ENCODE measurements at regions of chr5 and their contacts with region 1.

Region 1: DNA sequence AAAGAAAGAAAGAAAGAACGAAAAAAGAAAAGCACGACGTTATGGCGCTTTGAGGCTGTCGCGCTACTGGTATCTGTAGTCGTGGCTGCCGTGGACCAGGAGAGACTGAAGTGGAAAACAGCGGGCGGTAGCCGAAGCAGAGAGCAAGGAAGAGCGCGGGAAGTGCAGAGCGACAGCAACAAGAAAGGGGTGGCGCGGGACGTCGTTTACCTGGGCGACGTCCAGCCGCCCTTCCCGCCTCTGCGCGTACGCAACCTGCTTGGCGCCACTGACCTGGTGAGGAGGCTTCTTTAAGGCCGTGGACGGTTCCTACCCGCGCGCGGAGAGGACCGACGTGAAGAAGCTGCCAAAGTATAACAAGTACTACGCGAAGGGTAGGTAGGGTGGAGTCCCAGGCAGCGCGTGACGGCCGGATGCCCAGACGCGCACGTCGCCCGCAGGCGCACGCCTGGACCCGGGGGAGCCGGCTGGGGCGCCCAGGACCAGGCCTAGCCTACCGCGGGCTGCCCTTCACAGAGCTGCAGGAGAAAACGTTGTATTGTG is 15.4 kb downstream of the CCL28 start:
- DNase-seq: peak; percentile 49
- H3K4me3 Mint-ChIP-seq: peak overlapping the region; percentile 82
- H3K27ac Mint-ChIP-seq: peak overlapping the region; percentile 68
- H3K4me1 Mint-ChIP-seq: peaks cover 11% of the 10 kb centered on the region
- H3K27me3 Mint-ChIP-seq: no peaks in the 10 kb centered on the region
- CTCF ChIP-seq: no peak

Region 2: DNA sequence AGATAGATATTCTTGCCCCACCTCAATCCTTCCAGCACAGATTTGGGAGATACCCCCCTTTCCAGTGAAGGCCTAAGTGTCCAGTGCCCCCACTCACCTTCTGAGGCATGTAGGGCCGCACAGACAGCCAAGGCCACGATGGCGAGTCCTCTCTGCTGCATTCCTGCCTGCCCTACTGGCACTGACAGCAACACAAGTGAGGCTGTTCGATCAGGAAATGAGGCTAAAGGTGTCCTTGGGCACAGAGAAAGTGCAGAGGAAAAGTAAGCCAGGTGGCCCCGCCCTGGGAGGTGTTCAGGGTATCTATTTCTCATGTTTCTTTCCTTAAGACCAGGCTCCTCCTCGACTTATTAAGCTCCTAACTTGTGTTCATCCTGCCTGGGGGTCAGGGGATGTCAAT is 15.3 kb after region 1 on chr5 and contains the start of gene CCL28:
- CTCF ChIA-PET with region 1: interaction called, 17 read pairs
- POLR2A ChIA-PET with region 1: interaction called, 6 read pairs
- intact Hi-C with region 1: no loop called
- DNase-seq: no peak
- H3K4me3 Mint-ChIP-seq: no peak within 1 kb of the TSS
- H3K27ac Mint-ChIP-seq: no peak within 1 kb of the TSS
- H3K4me1 Mint-ChIP-seq: peaks cover 6% of the 10 kb centered on the region
- H3K27me3 Mint-ChIP-seq: no peaks in the 10 kb centered on the region
- CTCF ChIP-seq: no peak
- total RNA-seq, gene CCL28: 1.6 and 2.2 TPM in 2 replicates

Region 3: GRCh38 chr5:43422143-43422542 is 25.3 kb after region 1 on chr5:
- CTCF ChIA-PET with region 1: interaction called, 24 read pairs
- POLR2A ChIA-PET with region 1: interaction called, 4 read pairs
- intact Hi-C with region 1: no loop called
- DNase-seq: peak; percentile 91
- H3K4me3 Mint-ChIP-seq: peak overlapping the region; percentile 34
- H3K27ac Mint-ChIP-seq: peak overlapping the region; percentile 1
- H3K4me1 Mint-ChIP-seq: peaks cover 32% of the 10 kb centered on the region
- H3K27me3 Mint-ChIP-seq: no peaks in the 10 kb centered on the region
- CTCF ChIP-seq: no peak

Region 4: DNA sequence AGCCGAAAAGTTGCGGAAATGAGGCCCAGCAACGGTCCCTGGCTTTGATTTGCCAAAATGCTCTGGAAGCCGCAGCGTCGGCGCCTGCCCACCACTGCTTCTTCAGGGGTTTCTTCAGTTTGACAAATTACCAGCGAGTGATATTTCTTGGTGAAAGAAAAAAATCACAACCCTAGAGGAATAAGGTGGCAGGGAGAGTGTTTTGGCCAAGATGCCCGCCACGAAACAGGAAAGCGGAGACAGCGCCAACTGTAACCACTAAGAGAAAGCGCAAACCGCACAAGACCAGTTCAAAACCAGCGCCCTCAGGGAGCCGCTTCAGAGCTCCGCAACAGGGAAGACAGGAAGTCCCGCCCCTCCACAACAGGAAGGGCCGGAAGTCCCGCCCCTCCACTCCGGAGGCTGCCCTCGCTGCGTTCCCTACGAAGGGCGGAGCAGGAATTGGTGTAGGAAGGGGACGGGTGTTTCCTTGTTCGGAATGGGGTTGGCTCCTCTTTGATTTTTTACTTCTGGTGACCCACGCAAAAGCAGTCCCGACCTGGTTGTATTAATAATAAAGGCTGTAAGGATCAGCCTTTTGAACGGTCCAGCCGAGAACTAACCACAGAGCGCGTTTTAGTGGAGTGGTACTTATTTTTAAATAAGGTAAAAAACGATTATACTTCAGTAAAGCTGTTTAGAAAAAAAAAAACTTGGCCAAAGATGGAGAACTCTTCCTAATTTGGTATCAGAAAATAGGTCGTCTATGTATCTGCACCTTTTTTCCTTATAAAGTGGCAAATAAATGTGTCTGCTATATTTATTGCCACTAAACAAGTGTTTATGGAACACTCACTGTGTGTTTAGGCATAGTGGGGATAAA is 118.2 kb after region 1 on chr5 and contains the start of gene C5orf34:
- CTCF ChIA-PET with region 1: interaction called, 3 read pairs
- POLR2A ChIA-PET with region 1: interaction called, 4 read pairs
- intact Hi-C with region 1: loop called (anchors 1 kb)
- DNase-seq: peak; percentile 97
- H3K4me3 Mint-ChIP-seq: peak within 1 kb of the TSS; percentile 80
- H3K27ac Mint-ChIP-seq: peak within 1 kb of the TSS; percentile 90
- H3K4me1 Mint-ChIP-seq: peaks cover 21% of the 10 kb centered on the region
- H3K27me3 Mint-ChIP-seq: no peaks in the 10 kb centered on the region
- CTCF ChIP-seq: no peak
- total RNA-seq, gene C5orf34: 3.9 and 5.9 TPM in 2 replicates

Region 5: GRCh38 chr5:43556857-43557542 is 160.2 kb after region 1 on chr5 and contains the start of gene PAIP1:
- CTCF ChIA-PET with region 1: no interaction called
- POLR2A ChIA-PET with region 1: no interaction called
- intact Hi-C with region 1: loop called (anchors 2 kb)
- DNase-seq: peak; percentile 87
- H3K4me3 Mint-ChIP-seq: no peak within 1 kb of the TSS
- H3K27ac Mint-ChIP-seq: peak within 1 kb of the TSS; percentile 84
- H3K4me1 Mint-ChIP-seq: peaks cover 6% of the 10 kb centered on the region
- H3K27me3 Mint-ChIP-seq: no peaks in the 10 kb centered on the region
- CTCF ChIP-seq: peak; percentile 57
- total RNA-seq, gene PAIP1: 105 and 116 TPM in 2 replicates

Region 6: GRCh38 chr5:43582082-43583005 is 185.5 kb after region 1 on chr5:
- CTCF ChIA-PET with region 1: no interaction called
- POLR2A ChIA-PET with region 1: no interaction called
- intact Hi-C with region 1: no loop called
- DNase-seq: no peak
- H3K4me3 Mint-ChIP-seq: no peak overlapping the region
- H3K27ac Mint-ChIP-seq: no peak overlapping the region
- H3K4me1 Mint-ChIP-seq: no peaks in the 10 kb centered on the region
- H3K27me3 Mint-ChIP-seq: no peaks in the 10 kb centered on the region
- CTCF ChIP-seq: no peak

Region 7: GRCh38 chr5:43602461-43603343 is 205.9 kb after region 1 on chr5 and contains the start of gene NNT:
- CTCF ChIA-PET with region 1: interaction called, 3 read pairs
- POLR2A ChIA-PET with region 1: no interaction called
- intact Hi-C with region 1: loop called (anchors 2 kb)
- DNase-seq: peak; percentile 60
- H3K4me3 Mint-ChIP-seq: peak within 1 kb of the TSS; percentile 83
- H3K27ac Mint-ChIP-seq: peak within 1 kb of the TSS; percentile 99
- H3K4me1 Mint-ChIP-seq: peaks cover 11% of the 10 kb centered on the region
- H3K27me3 Mint-ChIP-seq: no peaks in the 10 kb centered on the region
- CTCF ChIP-seq: no peak
- total RNA-seq, gene NNT: 38.4 and 52.3 TPM in 2 replicates

Region 8: GRCh38 chr5:43646992-43647391 is 250.2 kb after region 1 on chr5:
- CTCF ChIA-PET with region 1: no interaction called
- POLR2A ChIA-PET with region 1: no interaction called
- intact Hi-C with region 1: no loop called
- DNase-seq: no peak
- H3K4me3 Mint-ChIP-seq: no peak overlapping the region
- H3K27ac Mint-ChIP-seq: no peak overlapping the region
- H3K4me1 Mint-ChIP-seq: no peaks in the 10 kb centered on the region
- H3K27me3 Mint-ChIP-seq: no peaks in the 10 kb centered on the region
- CTCF ChIP-seq: no peak

Region 9: DNA sequence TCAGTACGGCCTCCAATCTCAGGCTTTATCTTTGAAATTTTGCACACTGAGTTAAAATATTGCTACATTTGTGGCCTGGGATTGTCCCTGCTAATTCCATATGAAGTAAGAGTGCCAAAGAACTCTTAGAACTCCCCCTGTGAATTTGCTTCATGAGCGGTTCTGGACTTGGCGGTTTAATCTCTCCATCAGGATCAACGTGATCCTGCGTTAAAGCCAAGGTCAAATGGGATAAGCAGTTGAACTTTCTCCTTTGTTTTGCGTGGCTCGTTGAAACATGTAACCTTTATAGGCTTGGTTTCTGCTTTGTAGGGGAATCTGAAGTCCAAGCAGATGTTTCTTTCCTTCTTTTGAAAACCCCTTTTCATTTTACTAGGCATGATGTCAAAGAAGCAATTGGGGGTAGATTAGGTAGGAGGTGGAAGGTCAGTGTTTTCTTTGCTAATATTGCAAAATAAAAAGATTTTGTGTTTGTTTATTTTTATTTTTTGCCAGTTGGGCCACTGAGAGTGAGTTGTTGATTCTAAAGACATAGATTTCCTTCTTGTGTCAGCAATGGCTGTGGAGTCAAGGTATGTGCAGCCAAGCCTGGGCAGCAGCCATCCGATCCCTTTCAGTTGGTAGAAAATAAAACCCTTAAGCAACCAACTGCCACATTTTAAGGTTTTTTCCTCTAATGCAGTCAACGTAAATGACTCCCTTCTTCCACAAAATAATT is 597.0 kb after region 1 on chr5:
- CTCF ChIA-PET with region 1: no interaction called
- POLR2A ChIA-PET with region 1: no interaction called
- intact Hi-C with region 1: no loop called
- DNase-seq: no peak
- H3K4me3 Mint-ChIP-seq: no peak overlapping the region
- H3K27ac Mint-ChIP-seq: no peak overlapping the region
- H3K4me1 Mint-ChIP-seq: no peaks in the 10 kb centered on the region
- H3K27me3 Mint-ChIP-seq: no peaks in the 10 kb centered on the region
- CTCF ChIP-seq: no peak